Heart left ventricle (tissue), 16 donors: ENCODE measurements at regions of chr3 and their contacts with region 1.

Region 1: GRCh38 chr3:64267721-64268604 is 42.7 kb upstream of the PRICKLE2 start:
- DNase-seq: peak; percentile 76 to 78 (median 78)
- ATAC-seq: peak; percentile 83 to 91 (median 88)
- H3K4me3 ChIP-seq: peak overlapping the region; percentile 60 to 86 (median 75)
- H3K27ac ChIP-seq: peak overlapping the region; percentile 76 to 92 (median 88)
- H3K4me1 ChIP-seq: peaks cover 0 to 44% (median 21%) of the 10 kb centered on the region in 12 donors
- H3K27me3 ChIP-seq: no peaks in the 10 kb centered on the region
- CTCF ChIP-seq: peak in 1 of 12 donors; percentile 5
- POLR2A ChIP-seq: peak in 1 of 2 donors; percentile 77

Region 2: DNA sequence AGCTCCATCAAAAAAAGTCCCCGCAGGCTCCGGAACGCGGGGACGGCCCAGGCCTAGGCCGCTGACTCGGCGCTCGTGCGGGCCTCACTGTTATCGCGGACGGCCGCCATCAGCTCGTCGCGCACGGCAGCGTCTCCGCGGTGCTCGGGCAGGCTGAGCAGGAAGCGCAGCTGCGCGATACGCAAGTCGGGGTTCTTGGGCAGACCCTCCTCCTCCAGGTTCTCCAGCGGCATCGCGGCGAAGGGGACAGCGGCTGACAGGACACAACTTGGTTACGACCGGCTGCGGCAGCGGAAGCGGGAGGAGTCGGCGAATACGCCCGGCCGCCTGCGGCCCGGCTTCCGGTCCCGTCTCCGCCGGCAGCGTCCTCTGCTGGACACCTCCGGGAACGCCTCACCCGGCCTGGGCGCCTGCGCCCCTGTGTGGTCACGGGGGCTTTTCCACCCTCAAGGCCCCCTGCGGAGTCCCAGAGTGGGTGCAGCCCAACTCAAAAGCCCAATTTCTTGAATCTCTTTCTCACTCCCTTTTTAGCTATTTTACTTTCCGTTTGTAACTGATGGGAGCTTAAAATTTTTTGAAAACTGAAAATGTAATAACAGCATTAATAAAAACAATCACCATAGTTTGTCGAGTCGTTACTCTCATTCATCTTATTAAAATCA is 244.6 kb before region 1 on chr3 and contains the start of gene PSMD6:
- intact Hi-C with region 1: loop called in 1 of 10 experiments (anchors 10 kb)
- DNase-seq: peak; percentile 90 to 95 (median 91)
- ATAC-seq: peak; percentile 85 to 97 (median 96)
- H3K4me3 ChIP-seq: peak within 1 kb of the TSS; percentile 73 to 97 (median 89)
- H3K27ac ChIP-seq: peak within 1 kb of the TSS; percentile 21 to 92 (median 84)
- H3K4me1 ChIP-seq: peaks cover 5 to 32% (median 20%) of the 10 kb centered on the region in 12 donors
- H3K27me3 ChIP-seq: no peaks in the 10 kb centered on the region
- CTCF ChIP-seq: peak; percentile 98 to 100 (median 100)
- POLR2A ChIP-seq: peak in 1 of 2 donors; percentile 40
- total RNA-seq, gene PSMD6: 69.1 to 91.1 (median 82.5) TPM

Region 3: GRCh38 chr3:64213962-64214379 is 54.0 kb before region 1 on chr3:
- intact Hi-C with region 1: loop called in 1 of 10 experiments (anchors 5 kb)
- DNase-seq: peak; percentile 75 to 87 (median 79)
- ATAC-seq: peak; percentile 27 to 58 (median 50)
- H3K4me3 ChIP-seq: peak overlapping the region in 9 of 12 donors; percentile 10 to 48 (median 38)
- H3K27ac ChIP-seq: peak overlapping the region; percentile 26 to 84 (median 74)
- H3K4me1 ChIP-seq: peaks cover 3 to 87% (median 50%) of the 10 kb centered on the region in 12 donors
- H3K27me3 ChIP-seq: no peaks in the 10 kb centered on the region
- CTCF ChIP-seq: no peak
- POLR2A ChIP-seq: no peak

Region 4: GRCh38 chr3:64321747-64322146 is 53.8 kb after region 1 on chr3:
- intact Hi-C with region 1: loop called in 1 of 10 experiments (anchors 10 kb)
- DNase-seq: no peak
- ATAC-seq: peak in 1 of 4 donors; percentile 52
- H3K4me3 ChIP-seq: no peak overlapping the region
- H3K27ac ChIP-seq: no peak overlapping the region
- H3K4me1 ChIP-seq: peaks cover 0 to 3% (median 0%) of the 10 kb centered on the region in 12 donors
- H3K27me3 ChIP-seq: no peaks in the 10 kb centered on the region
- CTCF ChIP-seq: no peak
- POLR2A ChIP-seq: no peak

Region 5: DNA sequence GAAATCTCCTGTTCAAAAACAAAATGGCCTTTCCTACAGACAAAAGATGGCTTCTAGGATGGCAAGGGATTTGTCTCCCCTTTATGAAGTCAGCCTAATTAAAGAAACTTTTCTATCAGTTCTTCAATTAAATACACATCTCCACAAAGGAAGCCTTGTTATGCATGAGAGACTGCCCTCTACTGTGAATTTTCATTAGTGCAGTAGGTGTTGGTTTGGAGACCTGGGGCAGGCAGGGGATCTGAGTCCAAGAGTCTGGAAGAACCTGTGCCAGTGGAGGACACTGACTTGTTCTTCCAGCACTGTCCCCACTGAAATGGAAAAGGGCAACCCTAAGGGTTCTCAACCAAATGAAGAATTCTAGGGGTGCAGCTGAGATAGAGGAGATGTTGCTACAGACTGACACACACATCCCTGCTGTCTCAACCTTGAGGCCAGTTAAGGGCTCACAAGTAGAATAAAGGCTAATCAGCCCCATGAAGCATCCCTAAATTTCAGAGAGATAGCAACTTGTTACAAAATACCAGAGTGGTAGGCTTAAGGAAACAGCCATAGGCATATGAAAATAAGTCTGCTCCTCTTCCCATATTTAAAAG is 131.3 kb after region 1 on chr3:
- intact Hi-C with region 1: loop called in 5 of 10 experiments (anchors 5 to 10 kb)
- DNase-seq: peak in 2 of 5 donors; percentile 21 to 44
- ATAC-seq: peak in 3 of 4 donors; percentile 56 to 81 (median 60)
- H3K4me3 ChIP-seq: no peak overlapping the region
- H3K27ac ChIP-seq: no peak overlapping the region
- H3K4me1 ChIP-seq: no peaks in the 10 kb centered on the region
- H3K27me3 ChIP-seq: no peaks in the 10 kb centered on the region
- CTCF ChIP-seq: peak; percentile 52 to 88 (median 82)
- POLR2A ChIP-seq: no peak